Gastrocnemius medialis (tissue), 4 donors: ENCODE measurements at regions of chr19 and their contacts with region 1.

Region 1: DNA sequence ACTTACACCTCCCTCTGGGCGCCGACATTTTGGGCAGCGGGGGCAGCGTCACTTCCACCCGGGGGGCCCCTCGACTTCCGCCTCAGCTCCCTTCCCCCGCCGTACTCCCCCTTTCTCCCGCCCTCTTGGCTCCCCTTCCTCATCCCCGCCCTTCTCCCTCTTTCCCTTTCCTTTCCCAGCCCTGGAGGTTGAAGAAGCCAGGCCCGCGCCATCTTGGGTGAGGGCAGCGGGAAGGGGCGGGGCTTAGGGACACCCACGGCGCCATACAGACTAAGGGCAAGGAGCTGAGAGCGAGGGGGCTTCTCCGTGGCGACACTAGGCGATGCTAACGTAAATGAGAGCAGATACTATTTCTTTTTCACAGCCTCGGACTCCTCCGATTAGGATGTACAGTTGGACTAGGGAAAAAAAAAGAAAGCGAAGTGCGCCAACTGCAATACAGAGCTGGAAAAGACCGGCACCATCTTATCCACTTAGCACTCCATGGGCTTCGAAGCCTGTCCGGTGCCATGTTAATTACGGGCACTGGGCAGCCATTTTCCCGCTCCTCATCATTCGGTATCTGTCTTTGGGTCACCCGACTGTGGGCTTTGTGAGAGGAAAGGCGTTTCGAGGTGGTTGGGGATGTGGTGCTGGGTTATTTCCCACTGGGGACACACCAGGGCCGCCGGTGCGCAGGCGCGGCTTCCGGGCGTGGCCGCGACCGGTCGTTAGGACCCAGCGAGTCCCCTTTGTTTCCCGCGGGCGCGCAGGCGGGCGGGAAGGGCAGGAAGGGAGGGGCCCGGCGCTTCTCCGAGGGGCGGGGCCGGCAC is at the start of gene FIZ1:
- DNase-seq: peak; percentile 99
- ATAC-seq: peak; percentile 75 to 81
- H3K4me3 ChIP-seq: peak within 1 kb of the TSS; percentile 75 to 95 (median 86)
- H3K27ac ChIP-seq: peak within 1 kb of the TSS; percentile 97 to 100 (median 98)
- H3K4me1 ChIP-seq: peaks cover 16 to 28% of the 10 kb centered on the region in 2 donors
- H3K27me3 ChIP-seq: no peaks in the 10 kb centered on the region
- CTCF ChIP-seq: peak in 1 of 5 experiments; percentile 22
- POLR2A ChIP-seq: peak in 1 of 2 donors; percentile 28
- total RNA-seq, gene FIZ1: 6.8 to 11.2 (median 7.4) TPM

Region 2: GRCh38 chr19:54209811-54210494 is 1389.7 kb before region 1 on chr19:
- in situ Hi-C with region 1: no loop called
- intact Hi-C with region 1: loop called (anchors 10 kb)
- DNase-seq: peak; percentile 66 to 84
- ATAC-seq: peak; percentile 87 to 89
- H3K4me3 ChIP-seq: no peak overlapping the region
- H3K27ac ChIP-seq: peak overlapping the region; percentile 74 to 95 (median 86)
- H3K4me1 ChIP-seq: peaks cover 38 to 47% of the 10 kb centered on the region in 2 donors
- H3K27me3 ChIP-seq: no peaks in the 10 kb centered on the region
- CTCF ChIP-seq: no peak
- POLR2A ChIP-seq: peak; percentile 46 to 50

Region 3: DNA sequence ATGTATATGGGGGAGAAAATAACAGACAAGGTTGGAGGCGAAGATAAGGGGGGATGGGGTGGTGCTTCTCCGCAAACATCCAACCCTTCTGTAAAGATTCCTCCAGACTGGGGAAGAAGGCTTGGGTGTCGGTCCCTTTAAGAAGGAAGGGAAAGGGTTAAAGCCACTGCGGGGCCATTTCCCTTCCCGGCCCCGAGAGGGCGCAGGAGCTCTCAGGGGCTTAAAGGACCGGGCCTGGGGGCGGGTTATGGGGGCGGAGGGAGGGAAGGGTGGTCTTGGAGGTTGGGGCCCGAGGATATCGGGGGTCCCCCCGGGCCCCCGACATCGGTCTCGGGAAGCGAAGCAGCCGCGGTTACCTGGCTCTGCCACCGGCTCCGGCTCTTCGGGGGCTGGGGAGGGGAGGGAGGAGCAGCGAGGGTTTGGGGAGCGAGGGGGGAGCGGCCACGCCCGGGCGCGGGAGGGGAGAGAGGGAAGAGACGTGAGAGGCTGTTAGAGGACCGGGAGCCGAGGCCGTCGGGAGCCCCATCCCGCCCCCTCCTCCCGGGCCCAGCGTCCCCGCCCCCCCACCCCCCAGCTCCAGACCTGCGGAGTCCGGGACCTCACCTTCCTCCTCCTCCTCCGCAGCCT is 453.5 kb before region 1 on chr19:
- in situ Hi-C with region 1: no loop called
- intact Hi-C with region 1: loop called (anchors 5 kb)
- DNase-seq: peak in 1 of 2 donors; percentile 52
- ATAC-seq: no peak
- H3K4me3 ChIP-seq: peak overlapping the region; percentile 48 to 65 (median 56)
- H3K27ac ChIP-seq: peak overlapping the region; percentile 82 to 96 (median 93)
- H3K4me1 ChIP-seq: peaks cover 7 to 30% of the 10 kb centered on the region in 2 donors
- H3K27me3 ChIP-seq: peaks cover 14 to 30% (median 30%) of the 10 kb centered on the region in 3 donors
- CTCF ChIP-seq: peak; percentile 30 to 70 (median 56)
- POLR2A ChIP-seq: no peak

Region 4: DNA sequence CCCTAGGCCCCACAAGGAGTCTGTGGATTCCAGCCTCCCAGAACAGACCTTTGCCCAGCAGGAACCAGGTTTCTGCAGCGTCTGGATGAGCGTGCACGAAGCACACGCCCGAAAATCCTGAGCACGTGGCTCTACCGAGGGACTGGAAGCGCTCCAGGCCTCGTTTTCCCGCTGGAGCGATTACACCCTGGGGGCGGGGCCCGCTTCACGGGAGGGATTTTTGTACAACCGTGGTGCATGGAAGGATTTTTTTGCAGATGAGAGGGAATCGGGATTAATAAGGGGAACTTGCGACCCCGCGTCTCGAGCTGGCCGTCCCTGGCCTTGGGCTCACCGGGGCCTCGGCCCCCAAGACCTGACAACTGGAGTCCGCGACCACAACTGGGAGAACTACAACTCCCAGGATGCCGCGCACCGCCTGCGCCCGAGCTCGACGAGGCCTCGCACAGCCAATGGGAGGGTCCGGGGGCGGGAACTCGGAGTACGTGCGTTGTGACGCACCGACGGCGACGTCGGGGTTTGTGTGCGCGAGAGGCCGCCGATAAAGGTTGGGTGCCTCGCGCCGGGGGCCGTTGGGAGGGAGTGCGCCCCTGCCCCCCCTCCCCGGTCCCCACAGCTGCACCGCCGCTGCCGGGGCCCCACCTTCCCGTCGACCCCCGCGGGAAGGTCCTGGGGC is 123.4 kb before region 1 on chr19 and contains the start of gene ZNF628:
- in situ Hi-C with region 1: no loop called
- intact Hi-C with region 1: loop called (anchors 2 kb)
- DNase-seq: peak; percentile 98
- ATAC-seq: peak; percentile 93 to 95
- H3K4me3 ChIP-seq: peak within 1 kb of the TSS; percentile 59 to 90 (median 70)
- H3K27ac ChIP-seq: peak within 1 kb of the TSS; percentile 92 to 97 (median 96)
- H3K4me1 ChIP-seq: peaks cover 16 to 25% of the 10 kb centered on the region in 2 donors
- H3K27me3 ChIP-seq: peaks cover 0 to 3% (median 0%) of the 10 kb centered on the region in 3 donors
- CTCF ChIP-seq: no peak
- POLR2A ChIP-seq: peak; percentile 82 to 85
- total RNA-seq, gene ZNF628: 7.4 to 22.3 (median 14.1) TPM

Region 5: DNA sequence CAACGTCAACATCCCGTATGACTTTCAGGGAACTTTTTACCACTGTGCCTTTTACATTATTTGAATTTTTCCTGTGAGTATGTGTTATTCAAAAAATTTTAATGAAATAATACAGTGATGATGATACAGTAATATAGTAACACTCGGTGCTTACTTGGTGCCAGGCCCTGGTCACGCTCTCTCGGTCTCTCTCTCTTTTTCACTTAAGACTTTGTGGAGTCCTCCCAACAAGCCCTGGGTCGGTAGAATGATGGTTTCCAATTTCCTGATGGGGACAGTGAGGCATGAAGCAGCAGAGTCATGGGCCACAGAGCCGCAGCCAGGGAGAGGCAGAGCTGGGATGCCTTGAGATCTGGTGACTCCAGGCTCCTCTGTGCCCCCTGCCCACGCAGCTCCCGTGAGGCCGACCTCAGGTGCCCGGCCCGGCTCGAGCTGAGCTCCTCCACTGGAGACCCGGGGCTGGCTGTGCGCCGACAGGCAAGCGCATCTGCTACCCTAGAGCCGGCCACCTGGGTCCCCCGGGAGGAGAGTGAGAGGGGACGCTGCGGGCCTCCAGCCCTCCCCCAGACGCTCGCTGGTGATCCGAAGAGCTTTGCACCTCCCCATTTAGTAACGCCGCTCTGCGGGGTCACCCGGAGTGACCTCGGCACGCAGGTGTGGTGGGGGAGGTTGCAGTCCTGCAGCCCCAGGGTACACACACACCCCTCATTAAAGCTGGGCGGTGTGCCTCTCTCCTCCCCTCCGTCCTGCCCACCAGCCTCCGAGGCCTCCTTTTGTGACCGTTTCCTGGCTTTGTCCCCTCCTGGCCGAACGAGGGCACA is 50.0 kb before region 1 on chr19:
- in situ Hi-C with region 1: loop called in 1 of 4 experiments (anchors 5 kb)
- intact Hi-C with region 1: loop called (anchors 2 kb)
- DNase-seq: peak; percentile 88 to 89
- ATAC-seq: peak; percentile 67 to 72
- H3K4me3 ChIP-seq: peak overlapping the region; percentile 31 to 52 (median 42)
- H3K27ac ChIP-seq: peak overlapping the region; percentile 90 to 98 (median 94)
- H3K4me1 ChIP-seq: peaks cover 70 to 74% of the 10 kb centered on the region in 2 donors
- H3K27me3 ChIP-seq: no peaks in the 10 kb centered on the region
- CTCF ChIP-seq: peak in 1 of 5 experiments; percentile 15
- POLR2A ChIP-seq: peak; percentile 20 to 21

Region 6: DNA sequence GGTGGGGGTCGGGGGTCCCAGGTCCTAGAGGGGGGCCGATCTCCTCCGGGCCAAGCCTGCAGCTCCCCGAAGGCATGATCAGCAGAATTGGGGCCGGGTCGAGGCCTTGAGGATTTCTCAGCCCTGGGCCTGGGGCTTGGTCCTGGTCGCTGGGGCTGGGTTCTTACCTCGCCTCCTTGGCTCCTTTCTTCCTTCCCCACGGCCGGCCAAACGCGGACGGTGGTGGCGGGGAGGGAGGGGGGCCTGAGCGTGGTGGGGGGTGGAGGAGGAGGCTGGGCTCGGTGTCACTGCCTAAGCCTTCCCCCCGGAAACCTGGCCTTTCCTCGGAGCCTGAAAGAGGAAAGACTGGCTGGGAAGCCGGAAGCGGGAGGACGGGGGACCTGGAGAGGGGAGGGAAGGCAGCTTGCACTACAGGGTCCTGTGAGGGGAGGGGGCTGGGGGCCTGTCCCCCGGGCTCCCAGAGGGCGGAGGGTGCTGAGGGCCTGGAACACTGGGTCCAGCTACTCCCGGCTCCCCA is 19.0 kb before region 1 on chr19 and contains the start of gene ZNF579:
- in situ Hi-C with region 1: no loop called
- intact Hi-C with region 1: loop called (anchors 2 kb)
- DNase-seq: peak; percentile 75 to 85
- ATAC-seq: peak; percentile 81 to 86
- H3K4me3 ChIP-seq: peak within 1 kb of the TSS; percentile 92 to 98 (median 96)
- H3K27ac ChIP-seq: peak within 1 kb of the TSS; percentile 96 to 100 (median 98)
- H3K4me1 ChIP-seq: peaks cover 3 to 19% of the 10 kb centered on the region in 2 donors
- H3K27me3 ChIP-seq: peaks cover 0 to 3% (median 0%) of the 10 kb centered on the region in 3 donors
- CTCF ChIP-seq: no peak
- POLR2A ChIP-seq: no peak
- total RNA-seq, gene ZNF579: 15.0 to 19.3 (median 16.8) TPM

Region 7: DNA sequence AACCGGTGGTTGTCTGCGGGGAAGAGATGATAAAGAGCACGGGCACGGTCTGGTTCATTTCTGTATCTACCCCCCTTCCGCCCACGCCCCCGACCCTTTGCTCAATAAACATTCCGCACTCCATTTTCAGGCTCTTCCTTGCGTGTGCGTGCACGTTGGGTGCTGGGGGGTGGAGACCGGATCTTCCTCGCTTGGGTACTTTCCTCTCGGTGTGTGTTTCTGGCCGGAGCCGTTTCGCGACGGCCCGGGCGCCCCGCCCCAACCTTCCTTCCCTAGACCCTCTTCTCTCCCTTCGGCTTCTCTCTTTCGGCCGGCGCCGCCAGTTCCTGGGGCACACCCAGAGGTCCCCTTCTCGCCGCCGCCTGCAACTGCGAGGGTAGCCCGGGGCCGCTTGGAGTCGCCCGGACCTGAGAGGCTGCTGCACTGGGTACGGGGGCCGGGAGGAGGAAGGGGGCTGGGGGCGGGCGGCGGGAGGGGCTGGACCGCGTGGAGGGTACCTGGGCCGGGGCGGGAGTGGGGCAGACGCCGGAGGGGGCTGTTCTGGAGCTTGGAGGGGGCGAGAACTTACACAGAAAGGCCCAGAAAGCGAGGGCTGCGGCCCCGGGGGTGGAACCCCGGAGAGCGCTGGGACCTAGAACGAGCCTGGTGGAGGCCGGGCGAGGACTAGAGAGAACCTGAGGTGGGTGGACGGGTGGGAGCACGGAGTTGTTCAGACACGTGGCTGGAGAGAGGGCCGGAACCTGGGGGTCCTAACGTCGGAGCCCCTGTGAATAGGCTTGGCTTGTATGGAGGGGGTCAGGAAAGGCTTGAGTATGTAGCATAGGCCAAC is 43.9 kb after region 1 on chr19 and contains the start of gene ZNF581:
- in situ Hi-C with region 1: no loop called
- intact Hi-C with region 1: loop called (anchors 5 kb)
- DNase-seq: peak; percentile 35 to 63
- ATAC-seq: peak; percentile 47 to 51
- H3K4me3 ChIP-seq: peak within 1 kb of the TSS; percentile 80 to 99 (median 94)
- H3K27ac ChIP-seq: peak within 1 kb of the TSS; percentile 82 to 98 (median 90)
- H3K4me1 ChIP-seq: peaks cover 52 to 61% of the 10 kb centered on the region in 2 donors
- H3K27me3 ChIP-seq: no peaks in the 10 kb centered on the region
- CTCF ChIP-seq: peak in 1 of 5 experiments; percentile 13
- POLR2A ChIP-seq: peak in 1 of 2 donors; percentile 11
- total RNA-seq, gene ZNF581: 9.9 to 17.3 (median 13.7) TPM